CD4-positive, alpha-beta memory T cell (primary cell): ENCODE measurements at regions of chr1 and their contacts with region 1.

Region 1: DNA sequence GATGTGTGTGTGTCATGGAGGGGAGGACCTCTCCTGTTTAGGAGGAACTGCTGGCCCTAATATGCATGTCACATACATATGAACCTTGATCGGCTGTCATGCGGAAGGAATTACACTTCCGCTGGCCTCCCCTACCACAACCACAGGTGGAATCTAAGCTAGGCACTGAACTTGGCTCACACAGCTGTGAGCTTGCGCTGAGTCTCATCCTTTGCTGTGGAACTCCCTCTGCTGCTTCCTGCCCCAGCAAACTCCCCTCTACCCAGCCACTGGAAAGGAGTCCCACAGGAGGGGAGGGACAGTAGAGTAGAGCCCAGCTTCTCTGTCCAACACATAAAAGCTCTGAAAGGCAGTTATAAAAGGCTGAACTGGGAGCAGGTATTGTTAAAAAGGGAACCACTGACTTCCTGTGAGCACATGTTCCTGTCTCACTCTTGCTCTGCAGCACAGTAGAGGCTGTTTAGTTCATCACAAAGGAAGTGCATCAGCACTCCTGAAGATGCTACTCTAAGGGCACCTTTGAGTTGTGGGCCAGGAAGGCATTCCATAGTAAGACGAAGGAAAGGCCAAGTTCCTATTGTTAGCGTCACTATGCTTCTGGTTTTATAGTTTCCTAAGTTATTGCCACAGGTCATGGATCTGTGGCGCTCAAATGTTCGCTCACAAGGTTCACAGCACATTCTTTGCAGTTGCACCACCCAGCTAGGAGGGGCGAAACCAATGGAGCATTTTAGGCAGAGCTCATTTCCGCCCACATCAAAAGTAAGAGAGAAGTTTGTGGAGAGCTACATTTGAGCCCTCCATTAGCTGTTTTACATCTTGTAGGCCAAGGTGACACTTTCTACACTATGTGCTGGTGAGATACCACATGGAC is 17.7 kb upstream of the PTPRC start:
- DNase-seq: peak; percentile 77 to 87 (median 80)
- H3K4me3 ChIP-seq: peak overlapping the region; percentile 18 to 59
- H3K4me3 Mint-ChIP-seq: peak overlapping the region; percentile 73 to 92 (median 85)
- H3K27ac ChIP-seq: peak overlapping the region; percentile 73
- H3K27ac Mint-ChIP-seq: peak overlapping the region; percentile 91 to 98 (median 95)
- H3K4me1 ChIP-seq: peaks cover 100% of the 10 kb centered on the region
- H3K4me1 Mint-ChIP-seq: peaks cover 62 to 88% (median 79%) of the 10 kb centered on the region in 4 donors
- H3K27me3 ChIP-seq: no peaks in the 10 kb centered on the region
- H3K27me3 Mint-ChIP-seq: no peaks in the 10 kb centered on the region

Region 2: DNA sequence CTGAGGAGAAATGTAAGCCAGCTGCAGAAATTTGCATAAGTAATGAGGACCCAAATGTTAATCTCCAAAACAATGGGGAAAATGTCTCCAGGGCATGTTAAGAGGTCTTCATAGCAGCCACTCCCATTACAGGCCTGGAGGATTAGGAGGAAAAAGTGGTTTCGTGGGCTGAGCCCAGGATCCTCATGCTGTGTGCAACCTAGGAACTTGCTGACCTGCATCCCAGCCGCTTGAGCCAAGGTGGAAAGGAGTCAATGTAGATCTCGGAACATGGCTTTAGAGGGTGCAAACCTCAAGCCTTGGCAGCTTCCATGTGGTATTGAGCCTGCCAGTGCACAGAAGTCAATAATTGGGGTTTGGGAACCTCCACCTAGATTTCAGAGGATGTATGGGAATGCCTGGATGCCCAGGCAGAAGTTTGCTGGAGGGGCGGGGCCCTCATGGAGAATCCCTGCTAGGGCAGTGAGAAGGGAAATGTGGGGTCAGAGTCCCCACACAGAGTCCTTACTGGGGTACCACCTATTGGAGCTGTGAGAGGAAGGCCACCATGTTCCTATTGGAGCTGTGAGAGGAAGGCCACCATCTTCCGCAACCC is 1539.9 kb before region 1 on chr1:
- CTCF ChIA-PET with region 1: no interaction called
- POLR2A ChIA-PET with region 1: no interaction called
- intact Hi-C with region 1: no loop called
- DNase-seq: no peak
- H3K4me3 ChIP-seq: no peak overlapping the region
- H3K4me3 Mint-ChIP-seq: no peak overlapping the region
- H3K27ac ChIP-seq: no peak overlapping the region
- H3K27ac Mint-ChIP-seq: no peak overlapping the region
- H3K4me1 ChIP-seq: no peaks in the 10 kb centered on the region
- H3K4me1 Mint-ChIP-seq: peaks cover 0 to 5% (median 0%) of the 10 kb centered on the region in 4 donors
- H3K27me3 ChIP-seq: no peaks in the 10 kb centered on the region
- H3K27me3 Mint-ChIP-seq: peaks cover 0 to 5% of the 10 kb centered on the region in 2 donors

Region 3: DNA sequence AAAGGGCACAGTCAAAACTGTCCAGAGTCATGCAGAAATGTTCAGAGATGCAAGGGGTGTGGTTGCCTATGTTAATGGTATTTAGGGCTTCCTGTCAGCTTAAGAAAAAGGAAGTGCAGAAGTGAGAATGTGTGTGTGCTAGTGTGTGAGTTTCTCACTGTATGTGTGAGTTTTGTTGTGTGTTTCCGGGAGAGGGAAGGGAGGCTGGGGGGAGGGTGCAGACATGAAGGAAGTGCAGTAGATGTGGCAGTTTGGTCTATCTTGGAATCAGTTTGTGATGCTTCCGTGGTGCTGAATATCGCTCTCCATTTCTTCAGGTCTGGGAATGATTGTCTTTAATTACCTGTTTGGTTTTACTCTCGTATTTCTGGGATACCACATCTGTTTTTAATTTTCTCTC is 64.2 kb before region 1 on chr1:
- CTCF ChIA-PET with region 1: interaction called, 4 read pairs
- POLR2A ChIA-PET with region 1: interaction called, 37 read pairs
- intact Hi-C with region 1: loop called (anchors 2 kb)
- DNase-seq: peak; percentile 80 to 85 (median 83)
- H3K4me3 ChIP-seq: peak overlapping the region in 1 of 2 donors; percentile 30
- H3K4me3 Mint-ChIP-seq: peak overlapping the region; percentile 61 to 84 (median 74)
- H3K27ac ChIP-seq: no peak overlapping the region
- H3K27ac Mint-ChIP-seq: peak overlapping the region; percentile 9 to 80 (median 47)
- H3K4me1 ChIP-seq: peaks cover 80% of the 10 kb centered on the region
- H3K4me1 Mint-ChIP-seq: peaks cover 57 to 90% (median 71%) of the 10 kb centered on the region in 4 donors
- H3K27me3 ChIP-seq: no peaks in the 10 kb centered on the region
- H3K27me3 Mint-ChIP-seq: no peaks in the 10 kb centered on the region

Region 4: DNA sequence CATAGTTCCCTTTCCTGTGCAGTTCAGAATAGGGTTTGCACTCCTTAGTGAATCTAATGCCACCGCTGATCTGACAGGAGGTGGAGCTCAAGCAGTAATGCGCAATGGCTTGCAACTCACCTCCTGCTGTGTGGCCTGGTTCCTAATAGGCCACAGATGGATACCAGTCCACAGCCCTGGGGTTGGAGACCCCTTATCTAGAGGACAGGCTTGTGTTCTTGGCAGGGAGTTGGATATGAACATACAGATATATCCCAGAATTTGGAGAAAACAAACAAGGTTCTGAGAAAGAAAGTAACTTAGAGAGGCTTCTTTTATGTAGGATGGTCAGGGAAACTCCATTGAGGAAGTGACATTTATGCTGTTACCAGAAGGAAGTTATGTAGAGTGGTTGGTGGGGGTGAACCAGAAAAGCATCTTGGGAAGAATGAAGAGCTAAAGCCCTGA is 12.5 kb after region 1 on chr1:
- CTCF ChIA-PET with region 1: interaction called, 93 read pairs
- POLR2A ChIA-PET with region 1: interaction called, 494 read pairs
- intact Hi-C with region 1: loop called (anchors 1 kb)
- DNase-seq: no peak
- H3K4me3 ChIP-seq: no peak overlapping the region
- H3K4me3 Mint-ChIP-seq: peak overlapping the region in 7 of 8 donors; percentile 1 to 76 (median 36)
- H3K27ac ChIP-seq: no peak overlapping the region
- H3K27ac Mint-ChIP-seq: peak overlapping the region; percentile 29 to 88 (median 62)
- H3K4me1 ChIP-seq: peaks cover 96% of the 10 kb centered on the region
- H3K4me1 Mint-ChIP-seq: peaks cover 65 to 85% (median 70%) of the 10 kb centered on the region in 4 donors
- H3K27me3 ChIP-seq: no peaks in the 10 kb centered on the region
- H3K27me3 Mint-ChIP-seq: no peaks in the 10 kb centered on the region

Region 5: GRCh38 chr1:198657550-198658064 is 36.4 kb after region 1 on chr1:
- CTCF ChIA-PET with region 1: interaction called, 7 read pairs
- POLR2A ChIA-PET with region 1: interaction called, 196 read pairs
- intact Hi-C with region 1: loop called (anchors 1 kb)
- DNase-seq: peak; percentile 58 to 73 (median 65)
- H3K4me3 ChIP-seq: peak overlapping the region; percentile 22 to 33
- H3K4me3 Mint-ChIP-seq: peak overlapping the region; percentile 59 to 87 (median 79)
- H3K27ac ChIP-seq: peak overlapping the region; percentile 93
- H3K27ac Mint-ChIP-seq: peak overlapping the region; percentile 96 to 99 (median 98)
- H3K4me1 ChIP-seq: peaks cover 91% of the 10 kb centered on the region
- H3K4me1 Mint-ChIP-seq: peaks cover 43 to 65% (median 58%) of the 10 kb centered on the region in 4 donors
- H3K27me3 ChIP-seq: no peaks in the 10 kb centered on the region
- H3K27me3 Mint-ChIP-seq: no peaks in the 10 kb centered on the region

Region 6: DNA sequence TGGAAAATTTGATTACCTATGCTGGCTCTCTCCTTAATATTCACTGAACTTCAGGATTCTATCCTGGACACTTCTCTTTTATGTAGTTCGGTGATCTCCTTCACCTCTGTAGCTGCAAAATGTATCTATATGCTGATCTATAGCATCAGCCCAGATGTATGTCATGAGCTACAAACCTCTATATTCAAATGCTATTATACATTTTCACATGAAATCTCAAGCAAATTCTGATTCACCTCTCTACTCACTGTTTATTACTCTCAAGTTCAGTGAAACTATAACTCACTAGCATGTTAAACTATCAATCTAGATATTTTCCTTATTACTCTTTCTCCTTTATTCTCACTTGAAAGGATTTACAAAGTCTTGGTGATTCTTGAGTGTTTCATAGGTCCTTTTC is 69.9 kb after region 1 on chr1:
- CTCF ChIA-PET with region 1: interaction called, 69 read pairs
- POLR2A ChIA-PET with region 1: interaction called, 277 read pairs
- intact Hi-C with region 1: no loop called
- DNase-seq: no peak
- H3K4me3 ChIP-seq: no peak overlapping the region
- H3K4me3 Mint-ChIP-seq: peak overlapping the region; percentile 3 to 78 (median 44)
- H3K27ac ChIP-seq: peak overlapping the region; percentile 42
- H3K27ac Mint-ChIP-seq: peak overlapping the region; percentile 72 to 92 (median 88)
- H3K4me1 ChIP-seq: peaks cover 90% of the 10 kb centered on the region
- H3K4me1 Mint-ChIP-seq: peaks cover 60 to 85% (median 73%) of the 10 kb centered on the region in 4 donors
- H3K27me3 ChIP-seq: no peaks in the 10 kb centered on the region
- H3K27me3 Mint-ChIP-seq: no peaks in the 10 kb centered on the region

Region 7: GRCh38 chr1:199362996-199363395 is 741.8 kb after region 1 on chr1:
- CTCF ChIA-PET with region 1: no interaction called
- POLR2A ChIA-PET with region 1: no interaction called
- intact Hi-C with region 1: no loop called
- DNase-seq: no peak
- H3K4me3 ChIP-seq: no peak overlapping the region
- H3K4me3 Mint-ChIP-seq: no peak overlapping the region
- H3K27ac ChIP-seq: no peak overlapping the region
- H3K27ac Mint-ChIP-seq: no peak overlapping the region
- H3K4me1 ChIP-seq: no peaks in the 10 kb centered on the region
- H3K4me1 Mint-ChIP-seq: no peaks in the 10 kb centered on the region
- H3K27me3 ChIP-seq: no peaks in the 10 kb centered on the region
- H3K27me3 Mint-ChIP-seq: peaks cover 5 to 13% of the 10 kb centered on the region in 2 donors